Dendritic cell treated with granulocyte-macrophage colony-stimulating factor and Interleukin-4, amounts not matched to agents 40 ng/mL and 50 ng/mL, for 4 days (primary cell): ENCODE measurements at regions of chr16 and their contacts with region 1.

Region 1: DNA sequence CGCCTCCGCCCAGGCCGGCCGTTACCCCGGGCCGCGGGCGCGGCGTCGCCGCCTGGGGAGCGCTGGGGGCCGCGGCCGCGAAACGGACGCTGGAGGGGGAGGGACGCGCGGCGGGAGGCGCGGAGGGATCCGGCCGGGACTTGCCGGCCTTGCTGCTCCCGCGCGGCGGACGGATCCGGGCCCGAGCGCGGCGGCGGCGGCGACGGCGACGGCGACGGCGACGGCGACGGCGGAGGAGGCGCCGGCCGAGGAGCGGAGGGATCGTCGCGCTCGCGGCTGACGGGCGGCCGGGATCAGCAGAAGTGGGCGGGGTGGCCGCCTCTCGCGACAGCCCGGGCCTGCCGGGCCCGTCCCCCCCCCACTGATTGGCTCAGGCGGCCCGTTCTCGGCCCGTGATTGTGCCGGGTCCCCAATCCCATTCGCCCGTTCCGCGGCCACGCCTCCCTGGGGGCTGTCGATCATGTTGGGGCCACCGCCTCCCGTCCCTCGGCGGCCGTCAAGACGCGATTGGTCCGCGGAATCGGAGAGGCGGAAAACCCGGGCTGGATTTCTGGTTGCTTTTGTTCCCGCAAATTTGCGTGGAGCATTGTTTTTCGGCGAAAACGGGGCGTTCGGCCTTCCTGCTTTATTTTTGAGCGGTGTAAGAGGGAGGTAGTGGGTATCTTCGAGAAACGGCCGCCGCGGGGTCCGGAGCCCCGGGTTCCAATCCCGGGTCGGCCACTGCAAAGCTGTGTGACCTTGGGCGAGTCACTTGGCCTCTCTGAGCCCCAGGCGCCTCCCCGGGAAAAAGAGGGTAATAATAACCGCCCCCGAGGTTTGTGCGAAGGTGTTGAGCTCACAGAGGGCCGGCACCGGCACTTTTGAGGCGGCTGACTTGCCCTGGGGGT is at the start of gene ZCCHC14:
- H3K4me3 Mint-ChIP-seq: peak within 1 kb of the TSS; percentile 82
- H3K27ac Mint-ChIP-seq: peak within 1 kb of the TSS; percentile 81
- H3K4me1 Mint-ChIP-seq: peaks cover 54% of the 10 kb centered on the region
- H3K27me3 Mint-ChIP-seq: peaks cover 61% of the 10 kb centered on the region

Region 2: DNA sequence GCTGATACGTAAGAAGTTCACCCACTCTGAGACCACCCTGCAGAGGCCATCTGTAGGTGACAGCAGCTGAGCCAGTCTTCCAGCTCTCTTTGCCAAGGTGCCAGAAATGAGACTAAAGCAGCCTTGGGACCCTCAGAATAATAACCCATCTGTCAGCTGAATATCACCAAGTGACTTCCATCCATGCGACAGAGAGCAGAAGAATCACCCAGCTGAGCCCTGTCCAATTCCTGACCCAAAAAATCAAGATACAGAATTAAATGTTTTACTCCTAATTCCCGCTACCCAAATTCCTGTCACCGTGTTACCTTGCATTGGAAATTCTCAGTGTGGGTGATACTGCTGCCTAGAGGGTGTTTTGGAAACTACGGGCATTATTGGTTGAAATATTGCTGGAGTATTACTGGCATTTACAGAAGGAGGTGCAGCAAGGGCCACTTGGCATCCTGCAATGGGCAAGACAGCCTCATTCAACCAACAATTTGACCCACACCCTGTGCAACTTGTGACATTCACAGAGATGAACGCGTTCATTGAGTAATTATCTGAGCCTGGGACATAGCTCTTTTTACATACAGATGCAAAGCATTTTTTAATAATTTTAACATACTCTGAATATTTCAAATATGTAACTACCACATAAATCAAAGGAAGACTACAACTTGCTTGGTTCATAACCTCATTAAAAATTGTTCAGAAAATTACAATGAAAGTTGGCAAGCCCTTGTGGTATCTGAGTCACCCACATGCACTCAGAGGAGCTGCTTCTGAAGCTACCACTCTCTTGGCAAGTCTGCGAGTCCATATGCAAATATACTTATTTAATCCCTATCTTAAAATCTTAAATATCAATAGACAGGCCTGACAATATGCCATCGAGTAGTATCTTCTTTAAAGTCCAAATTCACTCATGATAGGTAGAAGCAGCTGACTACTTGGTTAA is 302.4 kb before region 1 on chr16:
- intact Hi-C with region 1: no loop called
- H3K4me3 Mint-ChIP-seq: no peak overlapping the region
- H3K27ac Mint-ChIP-seq: no peak overlapping the region
- H3K4me1 Mint-ChIP-seq: no peaks in the 10 kb centered on the region
- H3K27me3 Mint-ChIP-seq: no peaks in the 10 kb centered on the region

Region 3: GRCh38 chr16:87416826-87417527 is 76.0 kb before region 1 on chr16:
- intact Hi-C with region 1: no loop called
- H3K4me3 Mint-ChIP-seq: no peak overlapping the region
- H3K27ac Mint-ChIP-seq: no peak overlapping the region
- H3K4me1 Mint-ChIP-seq: no peaks in the 10 kb centered on the region
- H3K27me3 Mint-ChIP-seq: no peaks in the 10 kb centered on the region

Region 4: GRCh38 chr16:87464691-87465300 is 28.2 kb before region 1 on chr16:
- intact Hi-C with region 1: loop called (anchors 2 kb)
- H3K4me3 Mint-ChIP-seq: peak overlapping the region; percentile 69
- H3K27ac Mint-ChIP-seq: peak overlapping the region; percentile 96
- H3K4me1 Mint-ChIP-seq: peaks cover 51% of the 10 kb centered on the region
- H3K27me3 Mint-ChIP-seq: no peaks in the 10 kb centered on the region